Activated B cell treated with CpG ODN at 0.5 μM for 24 hours (primary cell): ENCODE measurements at regions of chr11 and their contacts with region 1.

Region 1: DNA sequence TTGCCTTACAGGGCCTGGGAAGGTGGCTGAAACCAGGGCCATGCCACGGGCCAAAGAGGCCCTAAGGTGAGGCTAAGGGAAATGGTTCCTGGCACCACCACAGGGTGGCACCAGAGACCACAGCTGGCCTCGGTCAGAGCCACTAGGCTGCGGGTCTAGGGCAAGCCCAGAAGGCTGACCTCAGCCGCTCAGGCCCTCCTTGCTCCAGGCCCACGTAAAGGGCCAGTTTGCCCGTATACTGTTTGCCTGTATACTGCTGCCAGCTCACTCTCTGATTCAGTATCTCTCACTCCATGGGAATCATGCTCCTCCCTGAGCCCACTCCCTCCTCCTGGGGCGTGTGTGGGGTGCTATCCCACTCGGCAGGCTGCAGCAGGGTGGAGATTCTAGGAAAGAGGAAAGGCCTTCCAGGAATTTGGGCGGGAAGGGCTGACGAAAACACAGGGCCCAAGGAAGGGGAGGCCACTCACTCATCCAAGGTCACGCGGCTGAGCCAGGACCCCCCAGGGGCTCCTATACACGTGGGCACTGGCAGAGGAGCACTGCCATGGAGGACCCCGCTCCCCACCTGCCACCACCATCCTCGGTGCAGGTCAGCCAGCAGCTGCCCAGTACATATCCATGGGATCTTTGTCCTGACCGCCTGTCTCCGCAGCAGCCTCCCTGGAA is 62.4 kb downstream of the NECTIN1 start:
- DNase-seq: peak; percentile 61
- ATAC-seq: peak; percentile 95
- H3K4me3 Mint-ChIP-seq: no peak overlapping the region
- H3K27ac Mint-ChIP-seq: no peak overlapping the region
- H3K4me1 Mint-ChIP-seq: no peaks in the 10 kb centered on the region
- H3K27me3 Mint-ChIP-seq: no peaks in the 10 kb centered on the region
- CTCF ChIP-seq: no peak

Region 2: GRCh38 chr11:119481021-119481666 is 185.5 kb before region 1 on chr11:
- CTCF ChIA-PET with region 1: no interaction called
- POLR2A ChIA-PET with region 1: no interaction called
- intact Hi-C with region 1: loop called (anchors 1 kb)
- DNase-seq: peak; percentile 70
- ATAC-seq: peak; percentile 79
- H3K4me3 Mint-ChIP-seq: no peak overlapping the region
- H3K27ac Mint-ChIP-seq: no peak overlapping the region
- H3K4me1 Mint-ChIP-seq: peaks cover 5% of the 10 kb centered on the region
- H3K27me3 Mint-ChIP-seq: peaks cover 40% of the 10 kb centered on the region
- CTCF ChIP-seq: no peak

Region 3: GRCh38 chr11:119709638-119710346 is 43.2 kb after region 1 on chr11:
- CTCF ChIA-PET with region 1: no interaction called
- POLR2A ChIA-PET with region 1: no interaction called
- intact Hi-C with region 1: no loop called
- DNase-seq: no peak
- ATAC-seq: peak; percentile 21
- H3K4me3 Mint-ChIP-seq: no peak overlapping the region
- H3K27ac Mint-ChIP-seq: no peak overlapping the region
- H3K4me1 Mint-ChIP-seq: no peaks in the 10 kb centered on the region
- H3K27me3 Mint-ChIP-seq: peaks cover 16% of the 10 kb centered on the region
- CTCF ChIP-seq: no peak

Region 4: DNA sequence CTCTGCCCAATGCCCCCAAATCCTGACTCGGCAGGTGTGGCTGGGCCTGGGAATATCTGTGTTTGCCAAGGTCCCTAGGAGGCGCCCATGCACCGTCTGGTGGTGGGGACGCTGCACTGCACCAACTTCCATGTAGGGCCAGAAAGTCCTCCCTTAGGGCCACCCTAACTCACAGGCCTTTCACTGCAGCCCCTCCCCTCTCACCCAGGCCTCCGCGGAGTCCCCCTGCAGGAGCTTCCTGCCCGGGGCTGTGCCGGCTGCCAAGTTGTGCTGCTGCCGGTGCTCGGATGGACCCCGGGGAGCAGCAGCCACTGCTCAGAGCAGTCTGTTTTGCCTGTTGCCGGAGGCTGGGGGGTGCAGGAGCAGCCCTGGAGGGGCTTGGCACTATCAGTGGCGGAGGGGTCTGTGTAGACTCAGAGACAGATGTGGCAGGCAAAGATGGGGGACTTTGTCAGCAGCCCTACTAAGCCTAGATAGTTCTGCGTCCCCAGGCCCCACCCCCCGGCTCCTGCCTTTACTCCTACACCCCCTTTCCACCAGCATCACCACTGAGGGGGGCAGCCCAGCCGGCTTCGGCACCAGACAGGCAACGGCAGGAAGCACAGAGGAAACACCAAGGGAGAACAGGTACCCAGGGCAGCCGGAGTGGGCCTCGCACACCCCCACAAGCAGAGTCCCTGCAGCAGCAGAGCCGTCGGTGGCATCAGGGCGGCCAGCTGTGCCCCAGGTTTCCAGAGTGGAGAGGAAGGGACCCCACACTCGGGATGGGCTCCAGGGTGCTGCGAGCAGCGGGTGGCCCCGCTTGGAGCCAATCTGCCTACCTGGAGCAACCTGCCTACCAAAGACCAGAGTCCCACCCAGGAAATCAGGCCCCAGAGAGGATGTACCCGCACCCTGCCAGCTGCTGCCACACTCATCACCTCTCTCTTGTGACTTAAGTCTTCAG is 347.0 kb after region 1 on chr11:
- CTCF ChIA-PET with region 1: no interaction called
- POLR2A ChIA-PET with region 1: no interaction called
- intact Hi-C with region 1: loop called (anchors 1 kb)
- DNase-seq: no peak
- ATAC-seq: no peak
- H3K4me3 Mint-ChIP-seq: no peak overlapping the region
- H3K27ac Mint-ChIP-seq: no peak overlapping the region
- H3K4me1 Mint-ChIP-seq: no peaks in the 10 kb centered on the region
- H3K27me3 Mint-ChIP-seq: peaks cover 47% of the 10 kb centered on the region
- CTCF ChIP-seq: no peak

Region 5: DNA sequence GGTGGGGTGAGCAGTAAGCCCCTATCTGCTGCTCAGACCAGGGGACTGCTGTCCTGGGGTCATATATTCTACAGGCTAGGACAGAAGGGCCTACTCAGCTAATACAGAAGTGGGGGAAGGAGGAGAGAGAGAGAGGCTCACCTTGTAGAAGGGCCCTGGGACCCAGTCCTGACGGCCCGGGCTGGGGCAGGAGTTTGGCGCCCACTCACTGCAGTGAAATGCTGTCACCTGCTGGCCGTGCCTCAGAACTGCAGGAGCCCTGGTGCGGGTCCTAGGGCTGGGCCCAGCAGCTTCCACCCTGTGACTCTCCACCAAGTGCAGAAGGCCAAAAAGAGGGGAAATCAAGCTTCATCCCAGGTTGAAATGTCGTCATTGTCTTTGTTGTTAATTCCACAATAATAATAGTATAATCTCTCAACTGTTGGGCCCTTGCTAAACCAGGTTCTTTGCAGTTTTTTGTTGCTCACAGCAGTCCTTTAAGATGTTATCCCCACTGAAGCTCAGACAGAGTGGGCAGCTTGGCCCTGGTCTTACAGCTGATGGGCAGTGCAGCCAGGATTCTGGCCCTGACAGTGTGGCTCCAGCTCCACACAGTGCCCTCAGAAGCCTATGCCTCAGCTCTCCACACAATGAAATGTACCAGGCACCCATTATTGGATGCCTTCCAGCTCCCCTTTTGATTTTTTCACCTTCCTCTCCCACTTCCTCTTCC is 441.7 kb after region 1 on chr11:
- CTCF ChIA-PET with region 1: interaction called, 12 read pairs
- POLR2A ChIA-PET with region 1: no interaction called
- intact Hi-C with region 1: loop called (anchors 1 kb)
- DNase-seq: peak; percentile 59
- ATAC-seq: peak; percentile 86
- H3K4me3 Mint-ChIP-seq: no peak overlapping the region
- H3K27ac Mint-ChIP-seq: no peak overlapping the region
- H3K4me1 Mint-ChIP-seq: no peaks in the 10 kb centered on the region
- H3K27me3 Mint-ChIP-seq: peaks cover 21% of the 10 kb centered on the region
- CTCF ChIP-seq: no peak

Region 6: GRCh38 chr11:120303004-120303637 is 636.5 kb after region 1 on chr11:
- CTCF ChIA-PET with region 1: interaction called, 3 read pairs
- POLR2A ChIA-PET with region 1: no interaction called
- intact Hi-C with region 1: loop called (anchors 1 kb)
- DNase-seq: peak; percentile 32
- ATAC-seq: peak; percentile 77
- H3K4me3 Mint-ChIP-seq: no peak overlapping the region
- H3K27ac Mint-ChIP-seq: no peak overlapping the region
- H3K4me1 Mint-ChIP-seq: no peaks in the 10 kb centered on the region
- H3K27me3 Mint-ChIP-seq: peaks cover 20% of the 10 kb centered on the region
- CTCF ChIP-seq: peak; percentile 76